ENCODE measurements at regions of chr17 and their contacts with region 1.

Region 1: GRCh38 chr17:56779898-56780733 is 53.6 kb downstream of the C17orf67 start:
- DNase-seq: peak; percentile 67 to 77
- ATAC-seq: peak; percentile 94 to 98
- H3K4me3 ChIP-seq: peak overlapping the region; percentile 22; the same call in 1 of the 3 replicates
- H3K27ac ChIP-seq: peak overlapping the region in 1 of 2 experiments; percentile 64; a peak in 3 of 6 replicates
- H3K4me1 ChIP-seq: peaks cover 6% of the 10 kb centered on the region; the same call in 2 of the 3 replicates
- CTCF ChIP-seq: peak; percentile 99
- EP300 ChIP-seq: no peak
- POLR2A ChIP-seq: no peak
- RAD21 ChIP-seq: peak; percentile 91 to 98

Region 2: GRCh38 chr17:56602292-56603130 is 177.6 kb before region 1 on chr17:
- CTCF ChIA-PET with region 1: interaction called, 16 read pairs
- POLR2A ChIA-PET with region 1: no interaction called
- DNase-seq: no peak
- ATAC-seq: no peak; a peak in 1 of 6 replicates
- H3K4me3 ChIP-seq: no peak overlapping the region
- H3K27ac ChIP-seq: no peak overlapping the region
- H3K4me1 ChIP-seq: peaks cover under 1% of the 10 kb centered on the region; the same call in 1 of the 3 replicates
- CTCF ChIP-seq: no peak
- EP300 ChIP-seq: no peak
- POLR2A ChIP-seq: no peak
- RAD21 ChIP-seq: no peak

Region 3: GRCh38 chr17:56629531-56630075 is 150.5 kb before region 1 on chr17:
- CTCF ChIA-PET with region 1: no interaction called
- POLR2A ChIA-PET with region 1: no interaction called
- DNase-seq: peak; percentile 45 to 77
- ATAC-seq: peak; percentile 98 to 99
- H3K4me3 ChIP-seq: no peak overlapping the region
- H3K27ac ChIP-seq: no peak overlapping the region
- H3K4me1 ChIP-seq: peaks cover 5% of the 10 kb centered on the region
- CTCF ChIP-seq: peak; percentile 29; the same call in 2 of the 3 replicates
- EP300 ChIP-seq: no peak
- POLR2A ChIP-seq: no peak
- RAD21 ChIP-seq: peak in 1 of 2 experiments; percentile 16; a peak in 1 of 5 replicates

Region 4: GRCh38 chr17:56727876-56728620 is 52.1 kb before region 1 on chr17:
- CTCF ChIA-PET with region 1: interaction called, 13 read pairs
- POLR2A ChIA-PET with region 1: no interaction called
- DNase-seq: no peak
- ATAC-seq: peak; percentile 21 to 62; a peak in 5 of 6 replicates
- H3K4me3 ChIP-seq: no peak overlapping the region
- H3K27ac ChIP-seq: no peak overlapping the region
- H3K4me1 ChIP-seq: no peaks in the 10 kb centered on the region
- CTCF ChIP-seq: no peak
- EP300 ChIP-seq: no peak
- POLR2A ChIP-seq: no peak
- RAD21 ChIP-seq: peak in 1 of 2 experiments; percentile 16; a peak in 1 of 5 replicates

Region 5: GRCh38 chr17:56754523-56755208 is 25.4 kb before region 1 on chr17:
- CTCF ChIA-PET with region 1: interaction called, 40 read pairs
- POLR2A ChIA-PET with region 1: no interaction called
- DNase-seq: peak; percentile 53 to 70
- ATAC-seq: peak; percentile 66 to 92; a peak in 5 of 6 replicates
- H3K4me3 ChIP-seq: no peak overlapping the region
- H3K27ac ChIP-seq: peak overlapping the region; percentile 54 to 75
- H3K4me1 ChIP-seq: peaks cover 20% of the 10 kb centered on the region
- CTCF ChIP-seq: no peak
- EP300 ChIP-seq: no peak
- POLR2A ChIP-seq: no peak
- RAD21 ChIP-seq: no peak

Region 6: DNA sequence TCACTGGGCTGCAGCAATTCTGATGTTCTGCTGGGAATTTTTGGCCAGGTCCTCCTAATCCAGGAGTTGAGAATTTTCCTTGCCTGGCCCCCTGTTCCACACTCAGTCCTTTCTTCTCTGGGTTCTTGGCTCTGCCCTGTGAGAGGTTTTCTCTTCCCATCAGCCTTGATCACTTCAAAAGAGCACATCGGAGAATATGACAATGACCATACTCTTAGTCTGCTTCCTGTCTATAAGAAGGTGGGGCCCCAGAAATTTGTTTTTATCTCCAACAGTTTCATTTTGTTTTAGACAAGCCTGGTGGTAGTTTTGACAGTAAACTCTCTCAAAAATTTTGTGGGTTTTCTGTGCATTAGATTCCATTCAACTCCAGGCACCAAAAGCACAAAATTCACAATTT is 17.1 kb before region 1 on chr17:
- CTCF ChIA-PET with region 1: interaction called, 29 read pairs
- POLR2A ChIA-PET with region 1: no interaction called
- DNase-seq: no peak
- ATAC-seq: no peak
- H3K4me3 ChIP-seq: no peak overlapping the region
- H3K27ac ChIP-seq: no peak overlapping the region
- H3K4me1 ChIP-seq: no peaks in the 10 kb centered on the region
- CTCF ChIP-seq: no peak
- EP300 ChIP-seq: no peak
- POLR2A ChIP-seq: no peak
- RAD21 ChIP-seq: no peak

Region 7: GRCh38 chr17:56793957-56794356 is 13.8 kb after region 1 on chr17:
- CTCF ChIA-PET with region 1: interaction called, 11 read pairs
- POLR2A ChIA-PET with region 1: no interaction called
- DNase-seq: no peak
- ATAC-seq: no peak
- H3K4me3 ChIP-seq: no peak overlapping the region
- H3K27ac ChIP-seq: no peak overlapping the region
- H3K4me1 ChIP-seq: no peaks in the 10 kb centered on the region
- CTCF ChIP-seq: no peak
- EP300 ChIP-seq: no peak
- POLR2A ChIP-seq: no peak
- RAD21 ChIP-seq: no peak

Measured in A549 (cell line).